Left ventricle myocardium superior (tissue), 1 donor: ENCODE measurements at regions of chr4 and their contacts with region 1.

Region 1: DNA sequence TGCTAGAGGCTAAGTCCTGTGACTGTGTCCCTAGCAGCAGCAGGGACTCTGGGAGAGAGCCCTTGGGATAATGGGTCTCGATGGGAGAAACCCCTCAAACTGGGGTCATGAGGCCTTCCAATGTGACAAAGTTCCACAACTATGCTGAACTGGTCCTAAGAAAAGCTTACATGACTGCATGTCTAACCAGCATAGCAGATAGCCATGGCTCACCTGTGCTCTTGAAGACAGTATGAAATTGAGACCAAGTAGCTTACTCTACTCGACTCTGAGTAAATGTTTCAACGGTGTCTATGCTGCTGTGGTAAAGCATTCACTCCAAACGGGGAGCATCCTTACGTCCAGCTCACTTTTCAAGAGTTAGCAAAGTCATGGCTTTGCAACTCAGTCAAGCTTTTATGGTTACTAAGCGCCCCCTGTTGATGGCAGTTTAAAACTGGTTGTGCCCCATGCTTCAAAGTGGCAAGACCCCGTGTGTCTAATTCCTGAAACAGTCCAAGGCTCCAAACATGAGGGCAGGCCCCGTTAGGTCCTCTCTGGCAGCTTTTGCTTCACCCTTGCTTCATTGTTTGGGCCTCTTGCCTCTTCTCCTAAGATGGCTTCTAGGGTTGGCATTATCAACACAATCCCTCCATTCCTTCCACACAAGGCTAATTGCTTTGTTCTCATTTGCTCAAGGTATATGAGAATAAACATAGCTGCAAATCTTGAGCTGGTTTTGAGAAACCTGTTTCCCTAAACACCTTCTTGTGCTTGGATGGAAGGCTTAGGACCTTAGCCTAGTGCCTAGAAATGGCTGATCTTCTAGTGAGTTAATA is 46.6 kb downstream of the CCNG2 start:
- DNase-seq: peak; percentile 29
- ATAC-seq: peak; percentile 85

Region 2: DNA sequence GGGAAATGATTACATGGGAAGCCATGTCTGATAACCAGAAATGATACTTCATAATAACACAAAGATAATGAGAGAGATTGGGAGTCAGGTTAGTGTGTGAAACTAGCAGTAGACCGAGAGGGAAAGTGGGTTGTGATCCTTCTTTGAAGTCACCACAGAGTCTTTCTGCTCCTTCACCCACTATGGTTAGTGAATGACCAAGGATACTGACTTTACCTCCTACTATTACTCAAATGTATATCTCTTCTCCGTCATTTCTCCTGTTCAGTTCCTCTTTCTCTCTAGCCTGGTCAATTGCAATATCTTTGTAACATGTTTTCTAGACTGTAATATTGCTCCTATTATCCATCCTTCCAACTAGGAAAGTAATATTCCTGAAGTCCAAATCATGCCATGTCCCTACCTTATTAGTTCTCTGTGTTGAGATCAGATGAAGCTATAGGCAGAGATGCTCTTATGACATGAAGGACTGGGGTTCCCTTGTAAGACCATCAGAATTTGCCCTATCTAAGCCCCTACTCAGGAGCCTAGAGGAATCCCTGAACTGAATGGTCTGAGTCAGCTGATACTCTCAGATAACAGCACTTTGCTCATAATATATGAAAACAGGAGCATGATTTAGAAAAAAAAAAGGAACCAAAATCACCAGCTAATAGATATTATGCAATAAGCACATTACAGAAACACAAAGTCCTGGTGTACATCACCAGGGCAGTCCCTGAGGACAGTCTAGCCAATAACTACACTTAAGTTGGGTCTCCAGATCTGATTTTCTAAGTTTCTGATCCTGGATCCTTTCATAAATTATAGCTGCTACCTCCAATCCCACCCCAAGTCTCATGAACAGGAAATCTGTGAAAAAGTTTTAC is 687.4 kb before region 1 on chr4:
- intact Hi-C with region 1: loop called (anchors 5 kb)
- DNase-seq: no peak
- ATAC-seq: no peak

Region 3: GRCh38 chr4:77052352-77052751 is 151.2 kb before region 1 on chr4:
- intact Hi-C with region 1: loop called (anchors 5 kb)
- DNase-seq: no peak
- ATAC-seq: no peak

Region 4: GRCh38 chr4:77095101-77095821 is 108.3 kb before region 1 on chr4:
- intact Hi-C with region 1: loop called (anchors 10 kb)
- DNase-seq: peak; percentile 83
- ATAC-seq: peak; percentile 98

Region 5: GRCh38 chr4:77146186-77147078 is 57.2 kb before region 1 on chr4:
- intact Hi-C with region 1: loop called (anchors 10 kb)
- DNase-seq: no peak
- ATAC-seq: no peak